ENCODE measurements at regions of chr12 and their contacts with region 1.

Region 1: GRCh38 chr12:108738170-108738569 is 6.9 kb upstream of the CORO1C start:
- DNase-seq: no peak
- ATAC-seq: no peak
- H3K4me3 ChIP-seq: no peak overlapping the region
- H3K27ac ChIP-seq: no peak overlapping the region
- H3K4me1 ChIP-seq: peaks cover 0 to 16% (median 0%) of the 10 kb centered on the region in 12 donors
- H3K27me3 ChIP-seq: no peaks in the 10 kb centered on the region
- CTCF ChIP-seq: no peak
- POLR2A ChIP-seq: no peak

Region 2: GRCh38 chr12:108678104-108678730 is 60.0 kb before region 1 on chr12:
- intact Hi-C with region 1: no loop called
- DNase-seq: no peak
- ATAC-seq: peak in 1 of 4 donors; percentile 28
- H3K4me3 ChIP-seq: no peak overlapping the region
- H3K27ac ChIP-seq: peak overlapping the region in 1 of 12 donors; percentile 59
- H3K4me1 ChIP-seq: peaks cover 0 to 15% (median 4%) of the 10 kb centered on the region in 12 donors
- H3K27me3 ChIP-seq: no peaks in the 10 kb centered on the region
- CTCF ChIP-seq: no peak
- POLR2A ChIP-seq: no peak

Region 3: GRCh38 chr12:108773798-108774788 is 35.9 kb after region 1 on chr12:
- intact Hi-C with region 1: loop called in 8 of 10 experiments (anchors 5 kb)
- DNase-seq: peak; percentile 85 to 97 (median 89)
- ATAC-seq: peak; percentile 95 to 98 (median 96)
- H3K4me3 ChIP-seq: no peak overlapping the region
- H3K27ac ChIP-seq: peak overlapping the region; percentile 56 to 89 (median 78)
- H3K4me1 ChIP-seq: peaks cover 3 to 49% (median 31%) of the 10 kb centered on the region in 12 donors
- H3K27me3 ChIP-seq: no peaks in the 10 kb centered on the region
- CTCF ChIP-seq: no peak
- POLR2A ChIP-seq: peak in 1 of 2 donors; percentile 44

Region 4: GRCh38 chr12:108950991-108951739 is 213.0 kb after region 1 on chr12:
- intact Hi-C with region 1: no loop called
- DNase-seq: peak; percentile 50 to 75 (median 67)
- ATAC-seq: peak; percentile 34 to 73 (median 68)
- H3K4me3 ChIP-seq: peak overlapping the region in 2 of 12 donors; percentile 9 to 21
- H3K27ac ChIP-seq: peak overlapping the region in 1 of 12 donors; percentile 36
- H3K4me1 ChIP-seq: peaks cover 0 to 18% (median 7%) of the 10 kb centered on the region in 12 donors
- H3K27me3 ChIP-seq: no peaks in the 10 kb centered on the region
- CTCF ChIP-seq: peak; percentile 75 to 97 (median 88)
- POLR2A ChIP-seq: no peak

Measured in heart left ventricle (tissue), 16 donors.